Endothelial cell of umbilical vein (primary cell): ENCODE measurements at regions of chr10 and their contacts with region 1.

Region 1: DNA sequence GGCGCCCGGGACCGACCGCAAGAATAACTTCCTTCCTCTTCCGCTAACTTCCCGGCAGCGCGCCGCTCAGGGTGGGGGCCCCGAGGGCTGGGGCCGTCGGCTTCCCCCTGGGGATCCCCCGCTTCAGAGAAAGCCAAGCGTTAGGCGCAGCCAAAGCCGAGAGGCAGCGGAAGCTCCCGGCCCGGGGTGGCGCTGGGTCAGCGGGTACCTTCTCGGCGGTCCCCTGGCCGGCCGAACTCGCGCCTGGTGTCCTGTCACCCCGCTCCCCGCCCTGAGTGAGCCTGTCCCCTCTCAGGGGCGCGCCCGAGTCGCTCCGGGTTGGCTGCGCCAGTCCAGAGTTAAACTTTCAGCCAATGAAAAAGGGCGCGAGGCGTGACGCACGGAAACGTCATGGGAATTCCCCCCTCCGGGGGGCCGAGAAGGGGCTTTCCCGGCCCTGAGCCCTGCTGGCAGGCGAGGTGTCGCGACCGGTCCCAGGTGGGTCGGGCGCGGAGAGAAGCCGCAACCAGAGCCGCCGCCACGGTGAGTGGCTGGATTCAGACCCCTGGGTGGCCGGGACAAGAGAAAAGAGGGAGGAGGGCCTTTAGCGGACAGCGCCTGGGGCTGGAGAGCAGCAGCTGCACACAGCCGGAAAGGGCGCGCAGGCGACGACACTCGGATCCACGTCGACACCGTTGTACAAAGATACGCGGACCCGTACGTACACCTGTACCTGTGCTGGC is 1.3 kb upstream of the NFKB2 start:
- DNase-seq: peak; percentile 93
- H3K4me3 ChIP-seq: peak overlapping the region; percentile 4 to 60 (median 53)
- H3K27ac ChIP-seq: peak overlapping the region; percentile 87
- H3K4me1 ChIP-seq: peaks cover 14% of the 10 kb centered on the region
- H3K27me3 ChIP-seq: peaks cover 6% of the 10 kb centered on the region in 2 experiments
- CTCF ChIP-seq: no peak
- POLR2A ChIP-seq: no peak

Region 2: GRCh38 chr10:102167861-102168260 is 226.4 kb before region 1 on chr10:
- CTCF ChIA-PET with region 1: interaction called, 22 read pairs
- POLR2A ChIA-PET with region 1: no interaction called
- dilution Hi-C with region 1: no loop called
- intact Hi-C with region 1: loop called (anchors 1 kb)
- DNase-seq: no peak
- H3K4me3 ChIP-seq: no peak overlapping the region
- H3K27ac ChIP-seq: no peak overlapping the region
- H3K4me1 ChIP-seq: no peaks in the 10 kb centered on the region
- H3K27me3 ChIP-seq: no peaks in the 10 kb centered on the region
- CTCF ChIP-seq: no peak
- POLR2A ChIP-seq: no peak

Region 3: GRCh38 chr10:102405596-102405995 is 11.4 kb after region 1 on chr10:
- CTCF ChIA-PET with region 1: interaction called, 37 read pairs
- POLR2A ChIA-PET with region 1: no interaction called
- dilution Hi-C with region 1: no loop called
- intact Hi-C with region 1: no loop called
- DNase-seq: no peak
- H3K4me3 ChIP-seq: no peak overlapping the region
- H3K27ac ChIP-seq: no peak overlapping the region
- H3K4me1 ChIP-seq: no peaks in the 10 kb centered on the region
- H3K27me3 ChIP-seq: peaks cover 25 to 27% of the 10 kb centered on the region in 2 experiments
- CTCF ChIP-seq: no peak
- POLR2A ChIP-seq: no peak

Region 4: GRCh38 chr10:102503281-102504220 is 109.3 kb after region 1 on chr10 and contains the start of gene SUFU:
- CTCF ChIA-PET with region 1: interaction called, 6 read pairs
- POLR2A ChIA-PET with region 1: no interaction called
- dilution Hi-C with region 1: no loop called
- intact Hi-C with region 1: loop called (anchors 1 kb)
- DNase-seq: peak; percentile 99
- H3K4me3 ChIP-seq: peak within 1 kb of the TSS; percentile 68 to 87 (median 76)
- H3K27ac ChIP-seq: peak within 1 kb of the TSS; percentile 52
- H3K4me1 ChIP-seq: peaks cover 16% of the 10 kb centered on the region
- H3K27me3 ChIP-seq: no peaks in the 10 kb centered on the region
- CTCF ChIP-seq: peak; percentile 89 to 91
- POLR2A ChIP-seq: peak; percentile 86
- total RNA-seq, gene SUFU: 14.5 and 16.3 TPM in 2 replicates

Region 5: GRCh38 chr10:102555781-102556328 is 161.6 kb after region 1 on chr10:
- CTCF ChIA-PET with region 1: no interaction called
- POLR2A ChIA-PET with region 1: no interaction called
- dilution Hi-C with region 1: no loop called
- intact Hi-C with region 1: no loop called
- DNase-seq: no peak
- H3K4me3 ChIP-seq: no peak overlapping the region
- H3K27ac ChIP-seq: no peak overlapping the region
- H3K4me1 ChIP-seq: no peaks in the 10 kb centered on the region
- H3K27me3 ChIP-seq: no peaks in the 10 kb centered on the region
- CTCF ChIP-seq: no peak
- POLR2A ChIP-seq: no peak